ENCODE measurements at regions of chr10 and their contacts with region 1.

Region 1: DNA sequence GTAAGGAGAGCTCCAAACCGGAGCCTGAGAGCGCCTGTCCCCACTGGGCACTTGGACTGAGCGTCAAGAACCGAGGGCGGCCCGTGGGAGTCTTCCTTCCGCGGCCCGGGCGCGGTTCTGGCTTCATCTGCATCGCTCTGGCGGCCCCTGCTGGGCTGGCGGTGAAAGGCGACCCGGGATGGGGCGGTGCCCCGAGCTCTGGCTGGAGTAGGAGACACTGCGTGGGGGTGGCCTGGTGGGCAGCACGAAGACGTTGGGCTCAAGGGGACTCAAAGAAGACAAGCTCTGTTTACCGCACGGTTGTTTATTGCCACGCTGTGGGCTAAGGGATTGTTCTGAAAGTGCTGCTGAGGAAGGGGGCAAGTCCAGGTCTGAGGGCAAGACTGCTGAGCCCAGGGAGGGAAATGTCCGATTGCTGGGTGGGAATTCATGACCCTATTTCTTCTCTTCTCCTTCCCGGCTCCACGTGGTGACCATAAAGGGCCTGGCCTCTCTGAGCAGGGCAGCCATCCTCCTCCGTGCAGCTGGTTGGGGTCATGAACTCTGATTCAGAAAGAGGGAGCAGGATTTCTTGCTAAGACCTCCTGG is 29.8 kb downstream of the PLAU start:
- DNase-seq: peak; percentile 89 to 92
- ATAC-seq: peak; percentile 90 to 94 (median 94)
- H3K4me3 ChIP-seq: peak overlapping the region in 5 of 10 donors; percentile 2 to 23 (median 18)
- H3K27ac ChIP-seq: peak overlapping the region; percentile 24 to 89 (median 75)
- H3K4me1 ChIP-seq: peaks cover 15 to 55% (median 36%) of the 10 kb centered on the region in 9 donors
- H3K27me3 ChIP-seq: no peaks in the 10 kb centered on the region
- CTCF ChIP-seq: peak; percentile 83 to 99 (median 97)

Region 2: GRCh38 chr10:73902351-73902750 is 38.4 kb before region 1 on chr10:
- intact Hi-C with region 1: loop called in 2 of 10 experiments (anchors 5 kb)
- DNase-seq: no peak
- ATAC-seq: no peak
- H3K4me3 ChIP-seq: no peak overlapping the region
- H3K27ac ChIP-seq: no peak overlapping the region
- H3K4me1 ChIP-seq: peaks cover 3 to 68% (median 15%) of the 10 kb centered on the region in 9 donors
- H3K27me3 ChIP-seq: no peaks in the 10 kb centered on the region
- CTCF ChIP-seq: no peak

Region 3: DNA sequence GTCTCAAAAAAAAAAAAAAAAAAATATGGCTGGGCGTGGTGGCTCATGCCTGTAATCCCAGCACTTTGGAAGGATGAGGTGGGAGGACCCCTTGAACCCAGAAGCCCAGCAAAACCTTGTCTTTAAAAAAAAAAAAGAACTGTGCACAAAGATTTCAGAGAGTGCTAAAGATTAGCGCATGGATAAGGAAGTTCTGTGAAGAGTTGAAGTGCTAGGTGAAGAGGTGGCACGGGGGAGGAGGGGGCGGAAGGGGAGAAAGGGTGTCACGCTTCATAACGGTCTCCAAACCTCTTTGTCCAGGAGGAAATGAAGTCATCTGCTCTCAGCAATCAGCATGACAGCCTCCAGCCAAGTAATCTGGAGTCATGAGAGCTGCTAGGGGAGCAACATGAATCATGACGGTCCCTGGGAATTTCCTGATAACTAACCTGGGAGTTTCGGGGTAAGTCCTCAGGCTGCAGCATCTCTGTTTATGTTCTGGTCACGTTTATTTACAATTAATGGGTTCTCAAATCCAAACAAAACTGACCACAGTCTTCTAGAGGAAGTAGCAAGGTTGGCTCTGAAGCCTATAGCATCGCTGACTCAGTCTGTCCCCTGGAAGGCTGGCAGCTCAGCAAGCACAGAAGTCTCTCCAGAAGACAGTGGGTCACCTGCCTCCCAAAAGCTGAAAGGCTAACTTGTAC is 31.7 kb before region 1 on chr10:
- intact Hi-C with region 1: loop called in 3 of 10 experiments (anchors 2 to 5 kb)
- DNase-seq: peak in 1 of 2 donors; percentile 69
- ATAC-seq: peak in 7 of 8 donors; percentile 5 to 57 (median 32)
- H3K4me3 ChIP-seq: peak overlapping the region in 3 of 10 donors; percentile 10 to 15 (median 13)
- H3K27ac ChIP-seq: peak overlapping the region in 9 of 10 donors; percentile 53 to 95 (median 88)
- H3K4me1 ChIP-seq: peaks cover 5 to 87% (median 50%) of the 10 kb centered on the region in 9 donors
- H3K27me3 ChIP-seq: peaks cover 0 to 14% (median 0%) of the 10 kb centered on the region in 7 donors
- CTCF ChIP-seq: no peak

Measured in heart right ventricle (tissue), 16 donors.